Astrocyte of the cerebellum (primary cell): ENCODE measurements at regions of chr17 and their contacts with region 1.

Region 1: DNA sequence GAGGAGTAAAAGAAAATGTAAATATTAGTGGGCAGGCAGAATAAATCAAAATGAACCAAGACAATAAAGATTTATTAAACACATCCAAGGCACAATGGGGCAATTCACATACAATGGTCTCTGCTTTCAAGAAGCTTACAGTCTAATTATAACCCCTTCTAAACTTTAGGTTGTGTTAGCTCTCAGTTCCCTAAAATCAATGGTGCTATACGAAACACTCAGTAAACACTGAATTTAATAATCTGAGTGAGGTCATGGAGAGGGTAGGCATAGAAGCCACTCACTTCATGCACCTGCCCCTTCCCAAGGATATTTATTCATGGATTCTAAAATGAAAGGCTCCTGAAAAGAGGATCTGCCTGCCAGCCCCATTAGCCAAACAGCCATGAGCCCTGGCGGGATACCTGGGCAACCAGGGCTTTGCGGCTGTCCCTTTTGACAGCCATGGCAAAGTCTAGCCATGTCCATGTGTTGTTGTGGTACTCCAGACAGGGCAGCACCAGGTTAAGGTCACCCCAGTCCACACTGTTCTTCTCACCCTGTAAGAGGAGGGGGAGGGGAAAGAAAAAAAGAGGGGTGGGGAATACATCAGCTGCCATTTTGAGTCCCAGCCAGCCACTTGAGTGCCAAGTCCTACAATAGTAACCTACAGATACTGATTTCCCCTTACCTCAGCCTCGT is 1.4 kb upstream of the RSKR start:
- DNase-seq: no peak
- H3K4me3 ChIP-seq: no peak overlapping the region
- CTCF ChIP-seq: no peak

Region 2: DNA sequence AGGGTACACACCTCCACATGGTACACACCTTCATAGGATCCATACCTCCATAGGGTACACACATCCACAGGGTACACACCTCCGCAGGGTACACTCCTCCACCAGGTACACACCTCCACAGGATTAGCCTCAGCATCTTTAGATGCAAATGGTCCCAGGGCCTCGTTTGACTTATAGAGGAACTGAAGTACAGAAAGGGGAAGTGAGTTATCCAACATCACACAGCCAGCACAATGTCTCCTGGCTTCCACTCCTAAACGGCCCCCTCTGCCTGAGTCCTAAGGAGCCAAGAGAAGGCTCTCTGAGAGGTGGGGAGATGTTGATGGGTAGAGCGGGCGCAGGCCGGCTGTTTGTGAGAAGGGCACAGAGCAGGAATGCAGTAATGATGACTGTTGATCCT is 97.3 kb before region 1 on chr17:
- in situ Hi-C with region 1: no loop called
- DNase-seq: no peak
- H3K4me3 ChIP-seq: no peak overlapping the region
- CTCF ChIP-seq: no peak

Region 3: GRCh38 chr17:28576758-28577465 is 38.5 kb before region 1 on chr17 and contains the start of gene ALDOC:
- in situ Hi-C with region 1: loop called (anchors 5 kb)
- DNase-seq: peak; percentile 55
- H3K4me3 ChIP-seq: peak within 1 kb of the TSS; percentile 35
- CTCF ChIP-seq: no peak